ENCODE measurements at regions of chr18 and their contacts with region 1.

Region 1: DNA sequence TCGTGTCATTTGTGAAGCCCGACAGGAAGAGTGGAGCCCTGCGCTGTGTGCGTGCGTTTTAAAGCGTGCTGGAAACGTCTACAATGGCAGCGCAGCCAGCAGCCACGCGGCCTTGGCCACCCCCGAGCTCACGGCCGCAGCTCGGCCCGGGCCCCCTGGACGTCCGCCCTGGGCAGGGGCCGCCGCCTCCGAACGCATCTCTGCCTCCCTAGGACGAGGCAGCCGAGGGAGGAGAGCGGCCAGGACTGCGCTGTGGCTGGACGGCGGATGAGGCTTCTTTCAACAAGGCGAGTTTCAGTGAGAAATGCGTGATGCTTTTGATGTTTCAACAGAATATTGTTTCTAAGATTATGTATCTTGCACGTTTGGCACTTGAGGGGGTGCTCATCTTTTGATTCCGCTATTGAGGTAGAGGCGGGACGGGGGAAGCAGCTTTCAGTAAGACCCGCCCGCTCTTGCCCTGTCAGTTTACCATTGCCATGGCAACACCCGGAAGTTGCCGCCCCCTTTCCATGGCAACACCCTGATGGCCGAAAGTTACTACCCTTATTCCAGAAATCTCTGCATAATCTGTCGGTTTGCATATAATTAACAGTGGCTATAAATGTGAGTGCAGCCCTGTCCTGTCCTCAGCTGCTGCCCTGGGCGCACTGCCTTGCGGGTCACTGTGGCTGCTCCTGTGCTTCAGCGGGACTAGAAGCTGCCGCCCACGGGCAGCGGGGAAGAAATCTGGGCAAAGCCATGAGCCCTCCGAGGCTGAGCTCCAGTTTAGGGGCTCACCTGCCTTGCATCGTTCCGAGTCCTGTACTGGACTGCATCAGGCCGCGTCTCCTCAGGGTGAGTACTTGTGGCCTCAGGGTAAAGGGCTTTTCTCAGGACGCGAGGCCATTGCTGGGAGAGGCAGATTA is 38.6 kb downstream of the ADNP2 start:
- DNase-seq: peak; percentile 41 to 79 (median 62)
- ATAC-seq: peak; percentile 89
- H3K4me3 ChIP-seq: peak overlapping the region; percentile 55
- H3K4me3 Mint-ChIP-seq: peak overlapping the region; percentile 78 to 91 (median 86)
- H3K27ac ChIP-seq: no peak overlapping the region
- H3K27ac Mint-ChIP-seq: peak overlapping the region in 7 of 9 donors; percentile 18 to 78 (median 55)
- H3K4me1 ChIP-seq: peaks cover 7 to 9% of the 10 kb centered on the region in 2 donors
- H3K4me1 Mint-ChIP-seq: peaks cover 0 to 26% (median 17%) of the 10 kb centered on the region in 7 donors
- H3K27me3 ChIP-seq: peaks cover 0 to 2% of the 10 kb centered on the region in 2 donors
- H3K27me3 Mint-ChIP-seq: peaks cover 0 to 27% (median 10%) of the 10 kb centered on the region in 5 donors

Region 2: GRCh38 chr18:79616651-79617518 is 530.8 kb before region 1 on chr18:
- CTCF ChIA-PET with region 1: no interaction called
- POLR2A ChIA-PET with region 1: no interaction called
- intact Hi-C with region 1: no loop called
- DNase-seq: no peak
- ATAC-seq: no peak
- H3K4me3 ChIP-seq: no peak overlapping the region
- H3K4me3 Mint-ChIP-seq: peak overlapping the region in 1 of 10 donors; percentile 21
- H3K27ac ChIP-seq: no peak overlapping the region
- H3K27ac Mint-ChIP-seq: no peak overlapping the region
- H3K4me1 ChIP-seq: no peaks in the 10 kb centered on the region
- H3K4me1 Mint-ChIP-seq: no peaks in the 10 kb centered on the region
- H3K27me3 ChIP-seq: no peaks in the 10 kb centered on the region
- H3K27me3 Mint-ChIP-seq: peaks cover 0 to 10% (median 4%) of the 10 kb centered on the region in 5 donors

Region 3: GRCh38 chr18:79790996-79791972 is 356.4 kb before region 1 on chr18:
- CTCF ChIA-PET with region 1: no interaction called
- POLR2A ChIA-PET with region 1: no interaction called
- intact Hi-C with region 1: loop called in 1 of 2 experiments (anchors 10 kb)
- DNase-seq: no peak
- ATAC-seq: peak; percentile 72
- H3K4me3 ChIP-seq: no peak overlapping the region
- H3K4me3 Mint-ChIP-seq: peak overlapping the region in 4 of 10 donors; percentile 11 to 45 (median 30)
- H3K27ac ChIP-seq: no peak overlapping the region
- H3K27ac Mint-ChIP-seq: no peak overlapping the region
- H3K4me1 ChIP-seq: no peaks in the 10 kb centered on the region
- H3K4me1 Mint-ChIP-seq: peaks cover 5 to 28% (median 8%) of the 10 kb centered on the region in 7 donors
- H3K27me3 ChIP-seq: peaks cover 0 to 3% of the 10 kb centered on the region in 2 donors
- H3K27me3 Mint-ChIP-seq: peaks cover 58 to 74% (median 67%) of the 10 kb centered on the region in 5 donors

Region 4: GRCh38 chr18:80034068-80034851 is 113.4 kb before region 1 on chr18 and contains the start of gene RBFA:
- CTCF ChIA-PET with region 1: no interaction called
- POLR2A ChIA-PET with region 1: no interaction called
- intact Hi-C with region 1: loop called (anchors 1 kb)
- DNase-seq: peak; percentile 95 to 100 (median 98)
- ATAC-seq: peak; percentile 88
- H3K4me3 ChIP-seq: peak within 1 kb of the TSS; percentile 83
- H3K4me3 Mint-ChIP-seq: peak within 1 kb of the TSS; percentile 84 to 95 (median 91)
- H3K27ac ChIP-seq: peak within 1 kb of the TSS; percentile 87
- H3K27ac Mint-ChIP-seq: peak within 1 kb of the TSS; percentile 86 to 99 (median 96)
- H3K4me1 ChIP-seq: peaks cover 8 to 14% of the 10 kb centered on the region in 2 donors
- H3K4me1 Mint-ChIP-seq: peaks cover 22 to 36% (median 29%) of the 10 kb centered on the region in 7 donors
- H3K27me3 ChIP-seq: no peaks in the 10 kb centered on the region
- H3K27me3 Mint-ChIP-seq: no peaks in the 10 kb centered on the region
- total RNA-seq, gene RBFA: 17.6 to 23.5 (median 21.7) TPM

Region 5: DNA sequence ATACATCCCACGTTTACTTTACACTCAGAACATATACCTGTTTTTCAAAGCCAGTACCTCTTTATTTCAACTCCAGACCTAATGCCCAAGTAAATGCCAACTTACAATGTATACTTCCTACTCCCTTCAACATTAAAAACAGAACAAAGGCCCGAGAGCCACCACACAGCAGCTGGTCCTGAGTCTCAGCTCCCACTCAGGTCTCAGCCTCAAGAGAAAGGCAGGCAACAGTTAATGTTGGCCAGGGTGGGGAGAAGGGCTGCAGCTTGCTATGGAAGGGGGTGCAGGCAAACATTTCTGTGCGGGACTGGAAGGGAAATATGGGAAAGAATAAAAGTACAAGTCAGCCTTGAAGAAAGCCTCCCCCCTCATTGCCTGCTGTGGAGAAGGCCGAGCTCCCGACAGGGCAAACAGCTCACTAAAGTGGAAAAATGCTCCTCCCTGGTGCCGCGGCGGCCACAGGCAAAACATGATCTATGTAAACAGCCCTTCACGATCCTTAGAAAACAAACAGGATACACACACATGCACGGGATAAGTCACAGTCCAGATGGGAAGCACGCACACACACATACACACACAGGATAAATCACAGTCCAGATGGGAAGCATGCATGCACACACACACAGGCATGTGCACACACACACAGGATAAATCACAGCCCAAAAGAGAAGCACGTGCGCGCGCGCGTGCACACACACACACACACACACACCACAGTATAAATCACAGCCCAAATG is 28.8 kb after region 1 on chr18:
- CTCF ChIA-PET with region 1: no interaction called
- POLR2A ChIA-PET with region 1: no interaction called
- intact Hi-C with region 1: no loop called
- DNase-seq: no peak
- ATAC-seq: no peak
- H3K4me3 ChIP-seq: no peak overlapping the region
- H3K4me3 Mint-ChIP-seq: no peak overlapping the region
- H3K27ac ChIP-seq: no peak overlapping the region
- H3K27ac Mint-ChIP-seq: peak overlapping the region in 2 of 9 donors; percentile 0 to 58
- H3K4me1 ChIP-seq: peaks cover 7 to 35% of the 10 kb centered on the region in 2 donors
- H3K4me1 Mint-ChIP-seq: peaks cover 2 to 23% (median 10%) of the 10 kb centered on the region in 7 donors
- H3K27me3 ChIP-seq: no peaks in the 10 kb centered on the region
- H3K27me3 Mint-ChIP-seq: peaks cover 10 to 45% (median 23%) of the 10 kb centered on the region in 5 donors

Measured in naive thymus-derived CD4-positive, alpha-beta T cell (primary cell).